ENCODE measurements at regions of chr9 and their contacts with region 1.

Region 1: GRCh38 chr9:5628530-5629311 is at the start of gene RIC1:
- DNase-seq: peak; percentile 77 to 96 (median 91)

Region 2: GRCh38 chr9:5832543-5833529 is 204.1 kb after region 1 on chr9 and contains the start of gene ERMP1:
- intact Hi-C with region 1: loop called (anchors 10 kb)
- DNase-seq: peak; percentile 86 to 97 (median 94)

Region 3: DNA sequence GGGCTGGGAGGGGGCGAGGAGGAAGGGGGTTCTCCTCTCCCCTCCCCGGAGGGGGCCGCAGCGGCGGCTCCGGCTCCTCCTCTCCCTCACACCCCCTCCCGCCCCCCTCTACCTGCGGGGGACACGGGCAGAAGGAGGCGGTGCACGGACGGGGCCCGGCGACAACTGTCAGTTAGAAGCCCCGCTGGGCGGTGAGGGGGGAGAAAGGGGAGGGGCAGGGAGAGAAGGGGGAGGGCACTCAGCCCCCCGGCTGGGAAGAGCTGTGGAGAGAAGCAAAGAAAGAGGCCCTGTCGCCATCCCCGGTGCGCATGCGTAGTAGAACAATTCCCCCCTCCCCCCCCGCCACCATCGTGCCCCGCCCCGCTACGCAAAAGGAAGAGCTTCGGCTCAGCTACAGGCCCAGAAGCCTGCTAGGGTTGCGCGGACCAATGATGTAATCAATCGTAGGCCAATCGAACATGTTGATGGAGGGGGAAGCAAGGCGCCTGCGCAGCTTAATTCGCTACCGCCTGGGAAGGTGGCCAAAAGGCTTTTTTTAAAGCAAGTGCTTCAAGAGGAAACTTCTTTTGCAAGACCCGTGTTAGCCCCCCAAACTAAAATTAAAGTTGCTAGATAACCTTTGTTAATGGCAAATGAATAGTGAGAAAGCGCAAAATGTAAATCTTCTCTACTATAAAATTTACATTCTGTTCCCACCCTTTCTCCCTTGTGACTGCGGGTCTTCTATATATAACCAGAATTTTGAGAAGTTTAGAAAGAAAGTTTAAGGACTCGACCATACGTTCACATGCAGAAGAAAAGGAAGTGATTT is 379.7 kb after region 1 on chr9:
- intact Hi-C with region 1: loop called (anchors 5 kb)
- DNase-seq: peak; percentile 88 to 98 (median 95)

Measured in head of caudate nucleus (tissue), 42 donors.